Endothelial cell of umbilical vein (primary cell): ENCODE measurements at regions of chr15 and their contacts with region 1.

Region 1: DNA sequence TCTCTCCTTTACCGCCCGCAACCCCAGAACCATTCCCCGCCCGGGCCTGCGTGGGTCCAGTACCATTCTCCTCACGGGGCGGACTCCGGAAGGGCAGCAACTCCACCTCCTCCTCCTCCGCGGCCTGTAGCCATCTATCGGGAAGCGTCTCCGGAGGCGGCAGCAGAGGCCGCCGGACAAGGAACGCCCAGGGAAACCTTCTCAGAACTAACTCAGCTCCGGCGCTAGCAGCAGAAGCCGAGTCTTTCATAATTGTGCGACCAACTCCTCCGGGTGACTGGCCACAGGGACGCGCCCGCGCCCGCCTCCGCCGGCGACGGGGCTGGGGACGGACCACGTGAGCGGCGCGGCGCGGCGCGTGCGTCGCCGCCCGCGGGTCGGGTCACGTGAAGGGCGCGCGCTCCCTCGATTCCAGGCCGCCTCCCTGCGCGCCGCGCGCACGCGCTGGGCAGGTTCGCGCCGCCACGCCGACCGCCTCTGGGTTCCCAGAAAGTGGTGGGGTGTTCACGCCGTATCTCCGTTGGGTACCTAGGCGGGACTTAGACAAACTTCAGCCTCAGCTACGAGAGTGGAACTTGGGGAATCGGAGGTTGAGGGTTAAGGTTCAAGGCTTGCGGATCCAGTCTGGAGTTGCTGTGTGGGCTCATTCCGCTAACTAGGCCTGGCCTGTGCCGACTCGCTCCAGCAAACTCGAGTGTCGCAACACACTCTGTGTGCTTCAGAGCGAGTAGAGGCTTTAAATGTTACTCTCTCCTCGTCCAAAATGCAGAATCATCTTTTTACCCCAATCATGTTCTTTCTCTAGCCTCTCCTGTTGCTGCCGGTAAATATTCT is at the start of gene TRPM7:
- DNase-seq: peak; percentile 84
- H3K4me3 ChIP-seq: peak within 1 kb of the TSS; percentile 79 to 90 (median 89)
- H3K27ac ChIP-seq: peak within 1 kb of the TSS; percentile 68
- H3K4me1 ChIP-seq: peaks cover 17% of the 10 kb centered on the region
- H3K27me3 ChIP-seq: no peaks in the 10 kb centered on the region
- CTCF ChIP-seq: no peak
- POLR2A ChIP-seq: peak; percentile 94
- total RNA-seq, gene TRPM7: 26.3 and 34.8 TPM in 2 replicates

Region 2: DNA sequence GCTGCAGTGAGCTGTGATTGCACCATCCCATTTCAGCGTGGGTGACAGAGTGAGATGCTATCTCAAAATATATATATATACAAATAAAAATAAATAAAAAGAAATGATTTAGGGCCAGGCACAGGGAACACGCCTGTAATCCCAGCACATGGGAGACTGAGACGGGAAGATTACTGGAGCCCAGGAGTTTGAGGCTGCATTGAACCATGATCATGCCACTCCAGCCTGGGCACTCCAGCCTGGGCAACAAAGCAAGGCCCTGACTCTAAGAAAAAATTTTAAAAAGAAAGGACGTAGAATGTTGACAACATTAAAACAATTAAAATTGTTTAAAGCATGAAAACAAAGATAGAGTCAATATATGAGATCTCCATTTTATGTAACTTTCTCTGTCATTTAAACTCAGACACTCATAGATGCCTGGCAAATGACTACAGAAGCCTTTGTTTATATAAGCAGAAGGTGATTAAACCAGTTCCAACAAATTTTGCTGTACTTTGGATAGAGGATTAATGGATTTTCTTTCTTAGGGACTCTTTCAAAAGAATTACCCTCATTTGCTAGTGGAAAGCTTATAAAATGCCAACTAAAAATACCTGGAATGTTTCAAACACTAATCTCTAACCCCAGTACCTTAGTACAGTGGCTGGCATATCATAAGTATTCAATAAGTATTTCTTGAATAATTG is 10.6 kb after region 1 on chr15:
- CTCF ChIA-PET with region 1: no interaction called
- POLR2A ChIA-PET with region 1: no interaction called
- dilution Hi-C with region 1: no loop called
- intact Hi-C with region 1: no loop called
- DNase-seq: no peak
- H3K4me3 ChIP-seq: no peak overlapping the region
- H3K27ac ChIP-seq: no peak overlapping the region
- H3K4me1 ChIP-seq: no peaks in the 10 kb centered on the region
- H3K27me3 ChIP-seq: no peaks in the 10 kb centered on the region
- CTCF ChIP-seq: no peak
- POLR2A ChIP-seq: no peak

Region 3: DNA sequence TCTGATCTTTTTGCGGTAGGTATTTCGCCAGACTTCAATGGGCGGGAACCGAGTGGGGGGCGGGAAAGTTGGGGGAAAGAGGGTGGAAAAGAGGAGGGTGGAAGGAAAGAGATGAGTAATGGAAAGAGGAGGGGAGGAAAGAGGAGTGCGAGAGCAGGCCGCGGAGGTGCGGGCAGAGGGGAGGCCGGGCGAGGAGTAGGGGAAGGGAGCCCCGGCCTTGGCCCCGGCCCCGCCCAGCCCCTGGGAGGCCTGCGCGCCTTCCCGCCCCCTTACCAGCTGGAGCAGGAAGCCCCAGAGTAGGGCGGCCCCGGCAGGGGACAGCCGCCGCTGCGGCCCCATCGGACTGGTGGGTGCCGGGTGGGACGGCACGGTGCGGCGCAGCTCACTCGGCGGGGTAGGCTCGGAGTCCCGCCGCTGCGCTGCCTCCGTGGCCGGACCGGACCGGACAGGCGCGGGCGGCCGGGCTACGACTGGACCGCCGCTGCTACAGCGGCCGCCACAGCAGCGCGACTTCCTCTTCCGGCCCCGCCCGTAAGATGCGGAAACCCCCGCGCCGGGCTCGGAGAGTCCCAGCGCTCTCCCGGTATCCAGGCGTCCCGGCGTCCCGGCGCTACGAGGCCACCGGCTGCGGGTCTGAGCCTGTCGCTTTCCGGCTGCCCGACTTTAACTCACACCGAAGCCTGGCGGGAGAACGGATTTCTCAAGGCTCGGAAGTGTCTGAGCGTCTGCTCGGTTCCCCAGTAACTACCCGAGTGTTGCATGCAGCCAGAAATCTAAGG is 78.7 kb after region 1 on chr15 and contains the start of gene SPPL2A:
- CTCF ChIA-PET with region 1: no interaction called
- POLR2A ChIA-PET with region 1: no interaction called
- dilution Hi-C with region 1: no loop called
- intact Hi-C with region 1: loop called (anchors 1 kb)
- DNase-seq: peak; percentile 77
- H3K4me3 ChIP-seq: peak within 1 kb of the TSS; percentile 77 to 93 (median 84)
- H3K27ac ChIP-seq: peak within 1 kb of the TSS; percentile 71
- H3K4me1 ChIP-seq: peaks cover 12% of the 10 kb centered on the region
- H3K27me3 ChIP-seq: no peaks in the 10 kb centered on the region
- CTCF ChIP-seq: no peak
- POLR2A ChIP-seq: peak; percentile 95
- total RNA-seq, gene SPPL2A: 80.1 and 88.7 TPM in 2 replicates

Region 4: GRCh38 chr15:50883903-50884302 is 197.2 kb after region 1 on chr15:
- CTCF ChIA-PET with region 1: interaction called, 3 read pairs
- POLR2A ChIA-PET with region 1: no interaction called
- dilution Hi-C with region 1: no loop called
- intact Hi-C with region 1: loop called (anchors 2 kb)
- DNase-seq: peak; percentile 71
- H3K4me3 ChIP-seq: no peak overlapping the region
- H3K27ac ChIP-seq: peak overlapping the region; percentile 68
- H3K4me1 ChIP-seq: peaks cover 23% of the 10 kb centered on the region
- H3K27me3 ChIP-seq: no peaks in the 10 kb centered on the region
- CTCF ChIP-seq: no peak
- POLR2A ChIP-seq: no peak

Region 5: DNA sequence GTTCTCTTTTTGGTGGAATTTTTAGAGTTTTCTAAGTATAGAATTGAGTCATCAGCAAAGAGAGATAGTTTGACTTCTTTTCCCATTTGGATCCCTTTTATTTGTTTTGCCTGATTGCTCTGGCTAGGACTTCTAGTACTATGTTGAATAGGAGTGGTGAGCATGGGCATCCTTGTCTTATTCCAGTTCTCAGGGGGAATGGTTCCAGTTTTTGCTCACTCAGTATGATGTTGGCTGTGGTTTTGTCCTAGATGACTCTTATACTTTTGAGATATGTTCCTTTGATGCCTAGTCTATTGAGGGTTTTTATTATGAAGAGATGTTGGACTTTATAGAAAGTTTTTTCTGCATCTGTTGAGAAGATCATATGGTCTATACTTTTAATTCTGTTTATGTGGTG is 335.5 kb after region 1 on chr15:
- CTCF ChIA-PET with region 1: no interaction called
- POLR2A ChIA-PET with region 1: no interaction called
- dilution Hi-C with region 1: no loop called
- intact Hi-C with region 1: no loop called
- DNase-seq: no peak
- H3K4me3 ChIP-seq: no peak overlapping the region
- H3K27ac ChIP-seq: no peak overlapping the region
- H3K4me1 ChIP-seq: no peaks in the 10 kb centered on the region
- H3K27me3 ChIP-seq: no peaks in the 10 kb centered on the region
- CTCF ChIP-seq: no peak
- POLR2A ChIP-seq: no peak